ENCODE measurements at regions of chr10 and their contacts with region 1.

Region 1: DNA sequence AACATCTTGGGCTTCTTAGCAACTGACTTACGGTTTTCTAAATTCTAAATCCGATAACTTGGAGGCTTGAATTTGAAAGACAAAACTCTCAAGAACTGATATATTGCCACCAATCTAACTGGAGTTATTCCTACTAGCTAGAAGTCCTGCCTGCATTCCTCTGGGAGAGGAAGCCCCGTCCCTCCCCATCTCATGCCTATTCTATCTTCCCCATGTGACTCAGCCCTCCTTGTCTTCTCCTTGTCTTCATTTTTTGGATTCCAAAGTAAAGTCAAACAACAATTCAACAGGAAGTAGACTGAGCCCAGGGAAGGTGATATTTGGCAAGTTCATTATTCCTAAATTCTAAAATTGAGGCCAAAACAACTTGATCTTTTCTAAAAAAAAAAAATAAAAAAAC is 587.7 kb downstream of the KCNMA1 start:
- DNase-seq: no peak
- ATAC-seq: no peak
- H3K4me3 ChIP-seq: no peak overlapping the region
- H3K4me3 Mint-ChIP-seq: no peak overlapping the region
- H3K27ac ChIP-seq: no peak overlapping the region
- H3K27ac Mint-ChIP-seq: no peak overlapping the region
- H3K4me1 ChIP-seq: no peaks in the 10 kb centered on the region
- H3K4me1 Mint-ChIP-seq: no peaks in the 10 kb centered on the region
- H3K27me3 ChIP-seq: no peaks in the 10 kb centered on the region
- H3K27me3 Mint-ChIP-seq: peaks cover 10% of the 10 kb centered on the region
- CTCF ChIP-seq: no peak

Region 2: DNA sequence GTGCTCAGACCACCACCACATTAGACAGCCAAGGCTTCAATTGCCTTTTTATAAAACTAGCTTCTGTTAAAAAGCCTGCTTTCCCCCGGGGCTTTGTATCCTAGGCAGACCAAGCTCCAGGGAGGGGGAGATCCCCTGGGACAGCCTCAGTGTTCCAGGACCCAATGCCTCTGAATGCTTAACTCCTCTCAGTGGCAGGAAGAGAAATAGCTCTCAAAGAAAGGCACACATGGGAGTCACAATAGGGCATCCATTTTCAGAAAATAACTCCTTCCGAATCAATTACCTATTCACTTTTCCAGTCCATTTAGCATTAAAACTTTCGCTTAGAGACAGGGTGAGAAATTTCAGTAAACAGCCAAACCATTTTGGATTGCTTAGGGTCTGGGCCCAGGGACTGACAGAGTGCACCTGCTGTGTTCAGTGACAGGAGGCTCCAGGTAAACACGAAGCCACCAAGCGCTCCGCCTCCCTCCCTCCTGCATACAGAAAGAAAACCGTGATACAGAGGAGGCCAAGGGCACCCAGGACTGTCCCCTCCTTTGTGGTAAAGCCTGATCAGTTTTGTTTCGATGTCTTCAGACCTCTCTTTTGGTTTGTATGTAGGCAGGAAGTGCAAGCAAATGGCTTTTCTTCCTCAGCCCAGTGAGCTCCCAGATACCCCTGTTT is 12.0 kb before region 1 on chr10:
- CTCF ChIA-PET with region 1: no interaction called
- POLR2A ChIA-PET with region 1: no interaction called
- intact Hi-C with region 1: loop called in 1 of 2 experiments (anchors 1 kb)
- DNase-seq: no peak
- ATAC-seq: no peak
- H3K4me3 ChIP-seq: no peak overlapping the region
- H3K4me3 Mint-ChIP-seq: no peak overlapping the region
- H3K27ac ChIP-seq: no peak overlapping the region
- H3K27ac Mint-ChIP-seq: peak overlapping the region; percentile 11
- H3K4me1 ChIP-seq: peaks cover 18% of the 10 kb centered on the region
- H3K4me1 Mint-ChIP-seq: peaks cover 18% of the 10 kb centered on the region
- H3K27me3 ChIP-seq: no peaks in the 10 kb centered on the region
- H3K27me3 Mint-ChIP-seq: peaks cover 2% of the 10 kb centered on the region
- CTCF ChIP-seq: no peak

Region 3: GRCh38 chr10:77131214-77131613 is 81.3 kb after region 1 on chr10:
- CTCF ChIA-PET with region 1: no interaction called
- POLR2A ChIA-PET with region 1: no interaction called
- intact Hi-C with region 1: no loop called
- DNase-seq: no peak
- ATAC-seq: no peak
- H3K4me3 ChIP-seq: no peak overlapping the region
- H3K4me3 Mint-ChIP-seq: no peak overlapping the region
- H3K27ac ChIP-seq: no peak overlapping the region
- H3K27ac Mint-ChIP-seq: no peak overlapping the region
- H3K4me1 ChIP-seq: no peaks in the 10 kb centered on the region
- H3K4me1 Mint-ChIP-seq: no peaks in the 10 kb centered on the region
- H3K27me3 ChIP-seq: peaks cover 0 to 4% of the 10 kb centered on the region in 2 experiments
- H3K27me3 Mint-ChIP-seq: peaks cover 14% of the 10 kb centered on the region
- CTCF ChIP-seq: no peak

Measured in CD8-positive, alpha-beta T cell (primary cell).